Motor neuron (in vitro differentiated cells): ENCODE measurements at regions of chr5 and their contacts with region 1.

Region 1: GRCh38 chr5:7391814-7392692 is 3.9 kb upstream of the ADCY2 start:
- ATAC-seq: peak; percentile 31 to 57 (median 48)
- H3K4me3 ChIP-seq: no peak overlapping the region
- H3K27ac ChIP-seq: no peak overlapping the region
- H3K4me1 ChIP-seq: peaks cover 14 to 31% of the 10 kb centered on the region in 2 donors

Region 2: DNA sequence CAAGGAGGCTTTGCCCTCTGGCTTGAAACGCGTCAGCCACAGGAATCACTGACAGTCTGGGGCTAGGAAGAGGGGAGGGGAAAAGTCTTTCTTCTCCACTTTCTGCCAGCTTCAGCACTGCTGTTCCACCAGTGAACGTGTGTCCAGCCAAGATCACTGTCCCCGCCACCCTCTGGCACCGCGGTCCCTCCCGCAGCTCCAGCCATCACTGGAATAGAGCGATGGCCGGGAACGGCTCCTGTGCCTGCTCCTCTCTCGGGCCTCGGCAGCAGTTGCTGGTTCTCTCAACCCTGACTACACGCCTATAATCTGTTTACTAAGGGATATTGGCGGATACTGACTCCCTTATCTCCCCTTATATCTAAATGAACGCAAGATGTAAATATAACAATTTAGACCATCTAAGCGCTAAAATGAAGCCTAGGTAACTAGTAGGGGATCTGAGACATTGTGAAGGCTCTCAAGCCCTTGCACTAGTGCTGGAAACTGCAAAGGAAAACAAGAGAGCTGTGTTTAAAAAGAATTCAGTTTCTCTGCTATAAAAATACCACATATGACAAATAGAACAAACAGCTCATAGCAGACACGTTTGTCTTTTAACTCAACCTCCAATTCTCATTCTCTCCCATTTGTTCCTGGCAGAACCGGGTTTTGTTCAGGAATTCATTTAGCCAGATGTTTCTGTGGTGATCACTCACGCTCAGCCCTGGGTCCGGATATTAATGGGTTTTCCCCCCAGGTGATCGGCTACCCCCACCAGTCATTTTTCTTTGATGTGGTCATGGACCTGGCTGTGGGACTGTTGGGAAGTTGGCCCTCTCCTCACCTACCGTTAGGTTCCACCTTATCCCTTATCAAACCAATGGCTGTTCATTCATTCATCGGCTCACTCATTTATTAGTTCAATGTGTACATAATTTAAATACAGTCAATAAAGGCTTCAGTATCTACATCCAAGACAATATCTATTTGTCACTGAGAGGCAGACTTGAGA is 1163.5 kb before region 1 on chr5:
- in situ Hi-C with region 1: no loop called
- ATAC-seq: no peak
- H3K4me3 ChIP-seq: no peak overlapping the region
- H3K27ac ChIP-seq: no peak overlapping the region
- H3K4me1 ChIP-seq: peaks cover 0 to 2% of the 10 kb centered on the region in 2 donors

Region 3: DNA sequence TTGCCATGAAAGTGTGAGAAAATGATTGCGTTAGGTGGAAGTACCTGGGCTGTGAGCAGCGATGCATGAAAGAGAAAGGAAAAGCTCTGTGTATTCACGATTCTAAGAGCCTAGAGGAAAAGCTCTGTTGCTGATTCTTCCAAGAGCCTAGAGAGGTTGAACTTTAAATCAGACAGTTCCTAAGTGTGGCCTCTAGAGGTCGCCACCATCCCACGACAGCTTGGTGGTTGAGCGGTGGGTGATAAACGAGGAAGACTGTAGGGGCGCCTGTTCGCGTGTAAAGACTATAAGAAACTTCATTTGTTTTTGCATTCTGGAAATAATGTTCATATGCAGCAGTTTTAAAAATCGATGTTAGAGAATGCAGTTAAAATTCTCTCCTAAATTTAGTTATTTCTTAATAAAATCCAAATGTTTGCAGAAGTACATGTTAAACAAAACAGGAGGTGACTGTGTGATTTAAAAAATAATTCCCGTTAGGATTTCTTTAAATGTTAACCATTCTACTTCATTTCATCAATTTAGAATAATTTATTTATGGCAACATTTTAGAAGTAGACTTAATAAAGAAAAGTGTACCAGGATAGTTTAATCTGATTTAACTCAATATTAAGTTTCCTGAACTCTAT is 571.1 kb before region 1 on chr5:
- in situ Hi-C with region 1: loop called in 1 of 9 experiments (anchors 25 kb)
- ATAC-seq: peak; percentile 48 to 85 (median 66)
- H3K4me3 ChIP-seq: no peak overlapping the region
- H3K27ac ChIP-seq: no peak overlapping the region
- H3K4me1 ChIP-seq: peaks cover 2 to 3% of the 10 kb centered on the region in 2 donors

Region 4: GRCh38 chr5:7261049-7261448 is 131.0 kb before region 1 on chr5:
- in situ Hi-C with region 1: loop called in 1 of 9 experiments (anchors 25 kb)
- ATAC-seq: peak; percentile 36 to 87 (median 60)
- H3K4me3 ChIP-seq: no peak overlapping the region
- H3K27ac ChIP-seq: no peak overlapping the region
- H3K4me1 ChIP-seq: peaks cover 0 to 3% of the 10 kb centered on the region in 2 donors